ENCODE measurements at regions of chr2 and their contacts with region 1.

Region 1: GRCh38 chr2:85888684-85889626 is at the start of gene ST3GAL5:
- DNase-seq: peak; percentile 84 to 97 (median 92)
- ATAC-seq: peak; percentile 81
- H3K4me3 ChIP-seq: peak within 1 kb of the TSS; percentile 88
- H3K4me3 Mint-ChIP-seq: peak within 1 kb of the TSS; percentile 98
- H3K27ac ChIP-seq: peak within 1 kb of the TSS; percentile 69 to 81
- H3K27ac Mint-ChIP-seq: peak within 1 kb of the TSS; percentile 95
- H3K4me1 ChIP-seq: peaks cover 47% of the 10 kb centered on the region
- H3K4me1 Mint-ChIP-seq: peaks cover 65% of the 10 kb centered on the region
- H3K27me3 ChIP-seq: no peaks in the 10 kb centered on the region
- H3K27me3 Mint-ChIP-seq: no peaks in the 10 kb centered on the region
- CTCF ChIP-seq: peak; percentile 87
- total RNA-seq, gene ST3GAL5: 76.7 to 77.8 TPM

Region 2: GRCh38 chr2:85723707-85724360 is 165.1 kb before region 1 on chr2:
- CTCF ChIA-PET with region 1: no interaction called
- POLR2A ChIA-PET with region 1: no interaction called
- intact Hi-C with region 1: no loop called
- DNase-seq: peak in 1 of 14 experiments; percentile 8
- ATAC-seq: no peak
- H3K4me3 ChIP-seq: no peak overlapping the region
- H3K4me3 Mint-ChIP-seq: no peak overlapping the region
- H3K27ac ChIP-seq: no peak overlapping the region
- H3K27ac Mint-ChIP-seq: no peak overlapping the region
- H3K4me1 ChIP-seq: peaks cover 2% of the 10 kb centered on the region
- H3K4me1 Mint-ChIP-seq: no peaks in the 10 kb centered on the region
- H3K27me3 ChIP-seq: peaks cover 3 to 5% of the 10 kb centered on the region in 2 experiments
- H3K27me3 Mint-ChIP-seq: peaks cover 2% of the 10 kb centered on the region
- CTCF ChIP-seq: no peak

Region 3: DNA sequence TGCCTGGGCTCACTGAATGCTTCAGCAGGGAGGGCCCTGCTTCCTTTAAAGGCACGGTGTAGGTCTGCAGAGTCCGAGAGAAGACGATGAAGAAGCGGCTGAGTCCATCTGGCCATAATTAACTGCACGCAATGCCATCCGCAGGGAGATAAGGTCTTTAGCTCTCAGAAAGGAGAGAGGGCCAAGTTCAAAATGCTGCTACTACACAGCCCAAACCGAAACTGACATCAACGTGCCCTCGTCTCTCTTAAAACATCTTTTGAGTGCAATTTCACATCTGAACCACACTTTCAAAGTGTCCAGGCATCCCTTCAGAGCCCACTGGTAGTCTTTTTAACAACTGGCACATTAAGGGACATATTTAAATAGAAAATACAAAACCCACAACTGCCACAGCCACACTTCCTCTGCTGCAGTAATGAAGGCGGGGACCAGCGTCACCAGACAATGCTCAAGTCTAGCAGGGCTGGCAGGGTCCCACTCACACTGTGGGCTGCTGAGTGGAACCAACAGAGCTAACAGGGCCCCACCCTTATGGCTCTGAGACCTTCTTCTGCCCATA is 35.9 kb before region 1 on chr2:
- CTCF ChIA-PET with region 1: interaction called, 35 read pairs
- POLR2A ChIA-PET with region 1: interaction called, 81 read pairs
- intact Hi-C with region 1: loop called (anchors 1 to 2 kb)
- DNase-seq: peak; percentile 55 to 90 (median 70)
- ATAC-seq: peak; percentile 88
- H3K4me3 ChIP-seq: peak overlapping the region; percentile 56
- H3K4me3 Mint-ChIP-seq: peak overlapping the region; percentile 83
- H3K27ac ChIP-seq: peak overlapping the region; percentile 92 to 96
- H3K27ac Mint-ChIP-seq: peak overlapping the region; percentile 100
- H3K4me1 ChIP-seq: peaks cover 52% of the 10 kb centered on the region
- H3K4me1 Mint-ChIP-seq: peaks cover 74% of the 10 kb centered on the region
- H3K27me3 ChIP-seq: no peaks in the 10 kb centered on the region
- H3K27me3 Mint-ChIP-seq: no peaks in the 10 kb centered on the region
- CTCF ChIP-seq: no peak

Region 4: GRCh38 chr2:85878719-85879385 is 10.1 kb before region 1 on chr2:
- CTCF ChIA-PET with region 1: interaction called, 14 read pairs
- POLR2A ChIA-PET with region 1: interaction called, 8 read pairs
- intact Hi-C with region 1: no loop called
- DNase-seq: peak in 1 of 14 experiments; percentile 11
- ATAC-seq: peak; percentile 63
- H3K4me3 ChIP-seq: no peak overlapping the region
- H3K4me3 Mint-ChIP-seq: no peak overlapping the region
- H3K27ac ChIP-seq: no peak overlapping the region
- H3K27ac Mint-ChIP-seq: no peak overlapping the region
- H3K4me1 ChIP-seq: peaks cover 16% of the 10 kb centered on the region
- H3K4me1 Mint-ChIP-seq: peaks cover 64% of the 10 kb centered on the region
- H3K27me3 ChIP-seq: no peaks in the 10 kb centered on the region
- H3K27me3 Mint-ChIP-seq: no peaks in the 10 kb centered on the region
- CTCF ChIP-seq: no peak

Region 5: GRCh38 chr2:86042256-86043168 is 153.6 kb after region 1 on chr2:
- CTCF ChIA-PET with region 1: interaction called, 52 read pairs
- POLR2A ChIA-PET with region 1: interaction called, 75 read pairs
- intact Hi-C with region 1: loop called in 1 of 2 experiments (anchors 1 kb)
- DNase-seq: no peak
- ATAC-seq: no peak
- H3K4me3 ChIP-seq: no peak overlapping the region
- H3K4me3 Mint-ChIP-seq: peak overlapping the region; percentile 32
- H3K27ac ChIP-seq: peak overlapping the region in 1 of 2 donors; percentile 46
- H3K27ac Mint-ChIP-seq: peak overlapping the region; percentile 97
- H3K4me1 ChIP-seq: peaks cover 44% of the 10 kb centered on the region
- H3K4me1 Mint-ChIP-seq: peaks cover 52% of the 10 kb centered on the region
- H3K27me3 ChIP-seq: no peaks in the 10 kb centered on the region
- H3K27me3 Mint-ChIP-seq: peaks cover 5% of the 10 kb centered on the region
- CTCF ChIP-seq: no peak

Region 6: DNA sequence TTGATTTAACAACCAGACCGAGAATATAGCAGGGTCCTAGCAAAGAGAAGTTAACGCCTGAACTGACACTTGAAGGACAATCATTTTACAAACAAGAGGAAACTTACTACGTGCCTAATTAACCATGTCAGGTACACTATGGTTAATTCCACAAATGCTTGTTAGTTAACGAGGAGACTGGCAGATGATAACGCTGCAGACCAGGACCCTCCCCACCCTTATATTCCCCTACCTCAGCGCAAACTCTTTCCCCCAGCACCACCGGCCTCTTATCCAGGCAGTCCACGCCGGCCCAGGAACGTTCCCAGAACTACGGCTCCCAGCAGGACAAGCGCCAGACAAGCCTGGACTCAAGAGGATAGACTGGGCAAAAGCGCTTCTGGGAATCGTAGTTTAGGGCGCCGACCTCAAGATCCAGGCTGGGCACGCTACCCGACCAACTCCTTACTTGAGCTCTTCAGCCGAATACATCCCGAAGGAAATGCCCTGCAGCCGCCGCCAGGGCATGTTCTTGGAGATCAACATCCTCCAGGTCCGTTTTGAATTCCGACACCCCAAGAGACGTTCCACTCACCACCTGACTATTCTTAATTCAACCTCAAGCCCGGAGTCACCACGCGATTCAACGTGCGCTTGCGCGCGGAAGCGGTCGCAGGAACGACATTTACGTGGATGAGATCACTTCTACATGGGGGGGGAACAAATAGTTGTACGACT is 216.5 kb after region 1 on chr2 and contains the start of gene POLR1A:
- CTCF ChIA-PET with region 1: interaction called, 8 read pairs
- POLR2A ChIA-PET with region 1: interaction called, 11 read pairs
- intact Hi-C with region 1: loop called in 1 of 2 experiments (anchors 1 kb)
- DNase-seq: peak; percentile 67 to 93 (median 75)
- ATAC-seq: peak; percentile 75
- H3K4me3 ChIP-seq: peak within 1 kb of the TSS; percentile 80
- H3K4me3 Mint-ChIP-seq: peak within 1 kb of the TSS; percentile 89
- H3K27ac ChIP-seq: peak within 1 kb of the TSS; percentile 81 to 87
- H3K27ac Mint-ChIP-seq: peak within 1 kb of the TSS; percentile 95
- H3K4me1 ChIP-seq: peaks cover 16% of the 10 kb centered on the region
- H3K4me1 Mint-ChIP-seq: peaks cover 60% of the 10 kb centered on the region
- H3K27me3 ChIP-seq: no peaks in the 10 kb centered on the region
- H3K27me3 Mint-ChIP-seq: no peaks in the 10 kb centered on the region
- CTCF ChIP-seq: no peak
- total RNA-seq, gene POLR1A: 13.1 to 13.4 TPM

Region 7: GRCh38 chr2:86686905-86687304 is 798.0 kb after region 1 on chr2:
- CTCF ChIA-PET with region 1: no interaction called
- POLR2A ChIA-PET with region 1: no interaction called
- intact Hi-C with region 1: no loop called
- DNase-seq: no peak
- ATAC-seq: no peak
- H3K4me3 ChIP-seq: no peak overlapping the region
- H3K4me3 Mint-ChIP-seq: no peak overlapping the region
- H3K27ac ChIP-seq: no peak overlapping the region
- H3K27ac Mint-ChIP-seq: no peak overlapping the region
- H3K4me1 ChIP-seq: no peaks in the 10 kb centered on the region
- H3K4me1 Mint-ChIP-seq: no peaks in the 10 kb centered on the region
- H3K27me3 ChIP-seq: no peaks in the 10 kb centered on the region
- H3K27me3 Mint-ChIP-seq: peaks cover 3% of the 10 kb centered on the region
- CTCF ChIP-seq: no peak

Measured in CD4-positive, alpha-beta T cell (primary cell).